Heart left ventricle (tissue), 16 donors: ENCODE measurements at regions of chr5 and their contacts with region 1.

Region 1: DNA sequence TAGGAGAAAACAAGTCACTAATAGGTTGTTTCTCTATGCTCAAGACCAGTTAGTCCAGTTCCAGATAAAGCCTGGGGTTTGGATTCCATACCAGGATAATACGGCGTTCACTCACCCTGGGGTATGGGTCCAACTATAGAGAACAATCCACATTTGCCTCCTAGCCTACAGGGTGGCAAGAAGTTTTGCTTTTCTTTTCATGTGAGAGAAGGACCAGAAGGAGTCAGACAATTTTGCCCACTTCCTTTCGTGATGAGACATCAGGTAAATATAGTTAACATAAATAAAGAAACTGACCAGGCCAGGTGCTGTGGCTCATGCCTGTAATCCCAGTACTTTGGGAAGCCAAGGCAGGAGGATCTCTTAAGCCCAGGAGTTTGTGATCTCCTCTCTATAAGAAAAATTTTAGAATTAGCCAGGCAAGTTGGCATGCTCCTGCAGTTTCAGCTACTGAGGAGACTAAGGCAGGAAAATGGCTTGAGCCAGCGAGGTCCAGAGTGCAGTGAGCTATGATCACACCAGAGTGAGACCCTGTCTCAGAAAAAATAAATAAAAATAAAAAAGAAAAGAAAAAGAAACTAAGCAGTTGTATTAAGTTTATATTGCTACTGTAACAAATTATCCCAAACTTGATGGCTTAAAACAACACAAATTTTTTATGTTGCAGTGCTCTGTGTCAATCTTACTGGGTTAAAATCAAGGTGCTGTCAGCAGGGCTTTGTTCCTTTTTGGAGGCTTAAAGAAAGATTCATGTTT is 7.5 kb upstream of the REEP5 start:
- DNase-seq: no peak
- ATAC-seq: no peak
- H3K4me3 ChIP-seq: no peak overlapping the region
- H3K27ac ChIP-seq: peak overlapping the region in 1 of 12 donors; percentile 39
- H3K4me1 ChIP-seq: peaks cover 0 to 38% (median 0%) of the 10 kb centered on the region in 12 donors
- H3K27me3 ChIP-seq: no peaks in the 10 kb centered on the region
- CTCF ChIP-seq: no peak
- POLR2A ChIP-seq: no peak

Region 2: DNA sequence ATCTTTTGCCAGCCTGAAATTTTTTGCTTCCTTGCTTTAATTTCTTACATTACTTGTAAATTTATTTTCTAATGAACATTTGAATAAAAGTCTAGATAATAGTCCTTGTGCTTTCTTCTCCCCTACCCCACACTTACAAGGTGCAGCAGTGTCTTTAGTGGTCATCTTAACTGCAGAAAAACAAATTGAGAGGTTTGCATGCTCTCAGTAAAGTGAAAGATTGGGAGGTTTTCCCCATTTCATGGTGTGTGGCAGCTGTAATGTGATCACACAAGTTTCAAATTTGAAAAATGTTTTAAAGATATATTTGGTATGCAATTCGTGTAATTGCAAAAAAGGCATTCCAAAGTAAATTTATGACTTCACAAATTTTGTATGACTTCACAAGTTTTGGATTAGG is 177.2 kb before region 1 on chr5:
- intact Hi-C with region 1: no loop called
- DNase-seq: no peak
- ATAC-seq: no peak
- H3K4me3 ChIP-seq: no peak overlapping the region
- H3K27ac ChIP-seq: no peak overlapping the region
- H3K4me1 ChIP-seq: peaks cover 0 to 22% (median 3%) of the 10 kb centered on the region in 12 donors
- H3K27me3 ChIP-seq: no peaks in the 10 kb centered on the region
- CTCF ChIP-seq: no peak
- POLR2A ChIP-seq: no peak

Region 3: DNA sequence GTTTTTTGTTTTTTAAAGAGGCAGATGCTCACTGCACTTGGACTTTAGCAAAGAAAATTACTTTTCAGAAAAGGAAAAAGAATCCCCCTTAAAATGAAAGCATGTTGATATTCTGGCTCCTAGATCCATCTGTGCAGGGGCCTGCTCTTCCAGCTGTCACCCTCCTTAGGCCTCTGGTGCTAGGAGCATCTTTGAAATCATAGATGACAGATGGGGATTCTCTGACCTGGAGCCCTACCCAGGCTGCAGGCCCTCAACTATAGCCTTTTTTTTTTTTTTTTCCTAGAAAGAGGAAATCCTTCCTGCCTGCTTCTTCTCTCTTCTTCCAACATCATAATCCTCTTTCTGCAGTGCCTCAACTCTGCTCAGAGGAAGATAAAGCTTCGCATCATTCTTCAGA is 30.8 kb after region 1 on chr5:
- intact Hi-C with region 1: loop called in 2 of 10 experiments (anchors 5 kb)
- DNase-seq: no peak
- ATAC-seq: no peak
- H3K4me3 ChIP-seq: no peak overlapping the region
- H3K27ac ChIP-seq: no peak overlapping the region
- H3K4me1 ChIP-seq: peaks cover 0 to 52% (median 27%) of the 10 kb centered on the region in 12 donors
- H3K27me3 ChIP-seq: no peaks in the 10 kb centered on the region
- CTCF ChIP-seq: no peak
- POLR2A ChIP-seq: no peak